ENCODE measurements at regions of chr17 and their contacts with region 1.

Region 1: GRCh38 chr17:68035523-68036303 is at the start of gene KPNA2:
- DNase-seq: peak; percentile 99
- H3K4me3 ChIP-seq: peak within 1 kb of the TSS; percentile 55 to 98 (median 93)
- H3K27ac ChIP-seq: peak within 1 kb of the TSS; percentile 79
- H3K4me1 ChIP-seq: peaks cover 19% of the 10 kb centered on the region
- H3K27me3 ChIP-seq: no peaks in the 10 kb centered on the region
- CTCF ChIP-seq: no peak
- POLR2A ChIP-seq: peak; percentile 97
- total RNA-seq, gene KPNA2: 311 and 382 TPM in 2 replicates

Region 2: DNA sequence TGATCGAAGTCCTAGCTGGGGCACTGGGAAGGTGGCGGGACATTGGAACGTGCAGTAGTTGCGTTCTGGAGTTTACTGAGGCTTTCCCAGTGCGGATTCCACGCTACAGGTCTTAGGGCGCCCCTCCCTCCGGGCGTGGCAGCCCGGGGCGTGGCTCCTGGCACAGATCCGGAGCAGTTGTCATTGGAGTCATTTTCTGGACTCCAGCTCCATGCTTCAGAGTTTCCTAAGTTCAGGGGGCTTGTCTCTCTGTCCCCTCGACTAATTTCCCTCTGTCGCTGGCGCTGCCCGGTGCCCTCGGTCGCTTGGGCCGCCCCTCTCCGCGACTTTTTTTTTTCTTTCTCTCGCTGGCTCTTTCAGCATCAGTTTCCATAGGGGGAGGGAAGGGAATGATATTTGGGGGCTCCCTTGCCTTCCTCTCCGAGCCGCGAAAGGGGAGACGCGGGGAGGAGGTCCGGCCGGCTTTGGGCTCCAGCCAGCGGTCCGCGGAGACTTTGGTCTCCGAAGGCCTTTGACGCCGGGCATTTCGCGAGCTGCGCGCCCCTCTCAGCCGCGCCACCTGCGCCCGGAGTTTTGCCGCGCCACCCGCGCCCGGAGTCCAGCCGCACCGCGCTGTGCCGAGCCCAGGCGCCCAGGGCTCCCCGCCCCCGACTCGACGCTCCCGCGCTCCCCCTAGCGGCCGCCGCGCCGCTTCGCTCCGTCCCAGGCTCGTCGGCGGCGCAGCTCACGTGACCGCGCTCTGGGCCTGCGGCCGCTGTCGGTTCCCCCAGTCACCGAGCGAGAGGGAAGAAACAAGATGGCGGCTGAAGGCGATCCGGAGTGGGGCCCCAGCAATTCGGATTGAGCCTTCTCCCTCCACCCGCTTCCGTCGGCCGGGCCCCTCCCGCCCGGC is 210.7 kb before region 1 on chr17 and contains the start of gene BPTF:
- CTCF ChIA-PET with region 1: no interaction called
- POLR2A ChIA-PET with region 1: no interaction called
- dilution Hi-C with region 1: no loop called
- intact Hi-C with region 1: loop called (anchors 1 kb)
- DNase-seq: peak; percentile 89
- H3K4me3 ChIP-seq: peak within 1 kb of the TSS; percentile 60 to 83 (median 78)
- H3K27ac ChIP-seq: no peak within 1 kb of the TSS
- H3K4me1 ChIP-seq: peaks cover 13% of the 10 kb centered on the region
- H3K27me3 ChIP-seq: no peaks in the 10 kb centered on the region
- CTCF ChIP-seq: peak; percentile 91 to 98
- POLR2A ChIP-seq: peak; percentile 71
- total RNA-seq, gene BPTF: 78.6 and 88.1 TPM in 2 replicates

Region 3: GRCh38 chr17:67959288-67959900 is 76.3 kb before region 1 on chr17:
- CTCF ChIA-PET with region 1: no interaction called
- POLR2A ChIA-PET with region 1: no interaction called
- dilution Hi-C with region 1: no loop called
- intact Hi-C with region 1: loop called (anchors 1 kb)
- DNase-seq: no peak
- H3K4me3 ChIP-seq: no peak overlapping the region
- H3K27ac ChIP-seq: no peak overlapping the region
- H3K4me1 ChIP-seq: peaks cover 2% of the 10 kb centered on the region
- H3K27me3 ChIP-seq: no peaks in the 10 kb centered on the region
- CTCF ChIP-seq: no peak
- POLR2A ChIP-seq: no peak

Region 4: DNA sequence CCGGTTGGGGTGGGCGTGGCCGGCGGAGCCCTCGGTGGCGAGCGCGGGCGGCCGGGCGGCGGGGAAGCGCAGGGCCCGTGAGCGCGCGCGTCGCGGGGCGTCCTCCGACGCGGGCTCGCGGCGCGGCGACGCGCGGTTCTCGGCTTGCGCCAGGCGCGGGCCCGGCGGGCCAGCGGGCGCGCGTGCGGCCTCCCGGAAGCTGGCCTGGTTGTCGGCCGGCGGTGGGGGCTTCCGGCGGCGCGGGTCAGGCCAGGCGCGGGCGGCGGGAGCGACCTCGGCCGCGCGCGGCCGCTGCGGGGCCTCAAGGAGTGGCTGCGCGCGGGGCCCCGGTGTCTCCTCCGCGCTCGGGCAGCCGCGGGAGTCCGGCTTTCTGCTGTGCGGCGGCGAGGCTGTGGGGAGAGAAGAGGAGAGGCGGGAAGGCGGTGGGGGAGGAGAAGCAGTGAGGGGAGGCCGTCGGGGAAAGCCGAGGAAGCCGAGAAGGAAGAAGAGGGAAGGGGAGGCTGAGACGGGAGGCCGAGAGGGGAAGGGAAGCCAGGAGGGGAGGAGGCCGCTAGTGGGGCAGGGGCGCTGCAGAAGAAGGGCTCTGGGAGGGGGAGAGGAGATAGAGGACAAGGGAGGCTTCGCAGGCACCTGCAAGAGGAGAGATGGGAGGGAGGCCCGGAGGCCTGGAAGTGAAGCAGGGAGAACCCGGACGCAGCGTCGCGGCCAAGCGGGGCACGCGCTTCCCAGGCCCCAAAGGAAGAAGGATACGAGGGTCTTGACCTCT is 41.9 kb before region 1 on chr17:
- CTCF ChIA-PET with region 1: no interaction called
- POLR2A ChIA-PET with region 1: interaction called, 6 read pairs
- dilution Hi-C with region 1: no loop called
- intact Hi-C with region 1: loop called (anchors 1 kb)
- DNase-seq: peak; percentile 74
- H3K4me3 ChIP-seq: peak overlapping the region; percentile 18 to 55 (median 50)
- H3K27ac ChIP-seq: peak overlapping the region; percentile 60
- H3K4me1 ChIP-seq: peaks cover 19% of the 10 kb centered on the region
- H3K27me3 ChIP-seq: no peaks in the 10 kb centered on the region
- CTCF ChIP-seq: no peak
- POLR2A ChIP-seq: no peak

Region 5: GRCh38 chr17:68019675-68020408 is 15.9 kb before region 1 on chr17:
- CTCF ChIA-PET with region 1: interaction called, 8 read pairs
- POLR2A ChIA-PET with region 1: no interaction called
- dilution Hi-C with region 1: no loop called
- intact Hi-C with region 1: loop called (anchors 1 kb)
- DNase-seq: peak; percentile 98
- H3K4me3 ChIP-seq: peak overlapping the region; percentile 37 to 54 (median 38)
- H3K27ac ChIP-seq: peak overlapping the region; percentile 25
- H3K4me1 ChIP-seq: peaks cover 7% of the 10 kb centered on the region
- H3K27me3 ChIP-seq: peaks cover 0 to 6% of the 10 kb centered on the region in 2 experiments
- CTCF ChIP-seq: peak; percentile 40 to 58
- POLR2A ChIP-seq: peak; percentile 91

Region 6: DNA sequence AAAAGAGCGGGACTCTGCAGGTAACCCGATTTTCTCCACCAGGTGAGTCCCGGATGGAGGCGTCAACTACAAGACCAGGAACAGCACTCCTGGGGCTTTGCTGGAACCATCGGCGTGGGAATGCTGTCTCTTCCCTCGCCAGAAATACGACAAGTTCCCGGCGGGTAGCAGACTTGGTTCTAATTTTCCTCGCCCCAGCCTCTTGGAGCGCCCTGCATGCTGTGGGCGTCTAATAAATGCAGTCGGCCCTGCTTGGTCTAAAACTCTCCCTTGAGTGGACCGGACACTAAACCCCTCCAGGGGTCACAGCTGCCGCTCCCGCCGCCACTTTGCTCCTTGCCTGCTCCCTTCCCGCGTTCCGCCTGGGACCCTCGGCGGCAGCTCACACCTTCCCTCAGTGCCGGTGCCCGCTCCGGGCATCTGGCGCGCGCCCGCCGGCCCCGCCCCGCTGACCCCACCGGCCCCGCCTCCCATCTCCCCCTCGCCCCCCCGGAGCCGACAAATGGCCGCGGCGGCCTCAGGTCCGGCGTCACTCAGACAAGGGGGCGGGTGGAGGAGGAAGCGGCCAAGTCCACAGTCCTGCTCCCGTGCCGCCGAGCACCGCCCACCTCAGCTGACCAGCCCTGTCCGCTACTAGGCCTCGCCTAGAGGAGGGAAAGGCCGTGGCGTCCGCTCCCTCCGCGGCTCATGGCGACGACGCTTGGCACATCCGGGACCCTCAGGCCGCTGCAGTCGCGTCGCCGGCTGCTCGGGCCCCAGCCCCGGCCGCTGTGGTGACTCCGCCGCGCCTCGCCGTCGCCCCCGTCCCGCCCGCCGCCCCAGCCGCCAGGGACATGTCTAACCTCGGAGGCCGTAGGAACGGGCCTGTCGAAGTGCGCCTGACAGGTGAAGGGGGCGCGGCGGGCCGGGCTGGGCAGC is 65.6 kb after region 1 on chr17:
- CTCF ChIA-PET with region 1: no interaction called
- POLR2A ChIA-PET with region 1: no interaction called
- dilution Hi-C with region 1: no loop called
- intact Hi-C with region 1: loop called (anchors 2 kb)
- DNase-seq: peak; percentile 89
- H3K4me3 ChIP-seq: peak overlapping the region; percentile 48 to 88 (median 54)
- H3K27ac ChIP-seq: peak overlapping the region; percentile 27
- H3K4me1 ChIP-seq: no peaks in the 10 kb centered on the region
- H3K27me3 ChIP-seq: no peaks in the 10 kb centered on the region
- CTCF ChIP-seq: no peak
- POLR2A ChIP-seq: peak; percentile 74

Measured in endothelial cell of umbilical vein (primary cell).